GM12878 (cell line): ENCODE measurements at regions of chr1 and their contacts with region 1.

Region 1: GRCh38 chr1:221741711-221742554 is at the start of gene DUSP10:
- DNase-seq: peak; percentile 97
- ATAC-seq: peak; percentile 75
- H3K4me3 ChIP-seq: peak within 1 kb of the TSS; percentile 90
- H3K27ac ChIP-seq: peak within 1 kb of the TSS; percentile 89
- H3K4me1 ChIP-seq: peaks cover 19% of the 10 kb centered on the region
- H3K27me3 ChIP-seq: no peaks in the 10 kb centered on the region
- CTCF ChIP-seq: peak in 2 of 3 experiments; percentile 9 to 46; a peak in 2 of 6 replicates
- EP300 ChIP-seq: no peak
- POLR2A ChIP-seq: peak; percentile 72
- RAD21 ChIP-seq: peak; percentile 47
- polyA plus RNA-seq, gene DUSP10: 20.3 to 32.1 TPM

Region 2: DNA sequence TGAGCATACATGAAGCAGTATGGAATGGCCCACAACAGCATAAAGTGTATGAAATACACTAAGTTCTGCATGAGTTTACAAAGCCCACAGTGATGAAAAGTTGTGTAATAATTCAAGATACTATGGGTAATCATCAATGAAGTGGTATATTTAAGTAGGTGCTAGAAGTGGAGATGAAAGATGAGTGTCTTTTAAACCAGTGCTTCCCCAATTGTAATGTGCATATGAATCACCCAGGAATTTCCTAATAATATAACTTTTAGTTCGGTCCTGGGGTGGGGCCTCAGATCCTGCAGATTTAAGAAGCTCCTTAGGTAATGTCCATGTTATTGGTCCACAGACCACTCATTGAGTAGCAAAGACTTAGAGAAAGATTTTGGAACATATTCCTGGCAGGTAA is 184.9 kb before region 1 on chr1:
- CTCF ChIA-PET with region 1: no interaction called
- POLR2A ChIA-PET with region 1: no interaction called
- RAD21 ChIA-PET with region 1: no interaction called
- SMC1A ChIA-PET with region 1: no interaction called
- in situ Hi-C with region 1: no loop called
- intact Hi-C with region 1: no loop called
- DNase-seq: no peak
- ATAC-seq: no peak
- H3K4me3 ChIP-seq: no peak overlapping the region
- H3K27ac ChIP-seq: no peak overlapping the region
- H3K4me1 ChIP-seq: no peaks in the 10 kb centered on the region
- H3K27me3 ChIP-seq: no peaks in the 10 kb centered on the region
- CTCF ChIP-seq: no peak
- EP300 ChIP-seq: no peak
- POLR2A ChIP-seq: no peak
- RAD21 ChIP-seq: no peak

Region 3: GRCh38 chr1:221643404-221644144 is 98.4 kb before region 1 on chr1:
- CTCF ChIA-PET with region 1: interaction called, 5 read pairs
- POLR2A ChIA-PET with region 1: interaction called, 3 read pairs
- RAD21 ChIA-PET with region 1: interaction called, 40 read pairs
- SMC1A ChIA-PET with region 1: interaction called, 8 read pairs
- in situ Hi-C with region 1: no loop called
- intact Hi-C with region 1: no loop called
- DNase-seq: peak; percentile 47
- ATAC-seq: peak; percentile 87
- H3K4me3 ChIP-seq: peak overlapping the region; percentile 29; the same call in 1 of the 2 replicates
- H3K27ac ChIP-seq: peak overlapping the region; percentile 74
- H3K4me1 ChIP-seq: peaks cover 18% of the 10 kb centered on the region
- H3K27me3 ChIP-seq: no peaks in the 10 kb centered on the region
- CTCF ChIP-seq: no peak
- EP300 ChIP-seq: no peak
- POLR2A ChIP-seq: no peak
- RAD21 ChIP-seq: no peak

Region 4: DNA sequence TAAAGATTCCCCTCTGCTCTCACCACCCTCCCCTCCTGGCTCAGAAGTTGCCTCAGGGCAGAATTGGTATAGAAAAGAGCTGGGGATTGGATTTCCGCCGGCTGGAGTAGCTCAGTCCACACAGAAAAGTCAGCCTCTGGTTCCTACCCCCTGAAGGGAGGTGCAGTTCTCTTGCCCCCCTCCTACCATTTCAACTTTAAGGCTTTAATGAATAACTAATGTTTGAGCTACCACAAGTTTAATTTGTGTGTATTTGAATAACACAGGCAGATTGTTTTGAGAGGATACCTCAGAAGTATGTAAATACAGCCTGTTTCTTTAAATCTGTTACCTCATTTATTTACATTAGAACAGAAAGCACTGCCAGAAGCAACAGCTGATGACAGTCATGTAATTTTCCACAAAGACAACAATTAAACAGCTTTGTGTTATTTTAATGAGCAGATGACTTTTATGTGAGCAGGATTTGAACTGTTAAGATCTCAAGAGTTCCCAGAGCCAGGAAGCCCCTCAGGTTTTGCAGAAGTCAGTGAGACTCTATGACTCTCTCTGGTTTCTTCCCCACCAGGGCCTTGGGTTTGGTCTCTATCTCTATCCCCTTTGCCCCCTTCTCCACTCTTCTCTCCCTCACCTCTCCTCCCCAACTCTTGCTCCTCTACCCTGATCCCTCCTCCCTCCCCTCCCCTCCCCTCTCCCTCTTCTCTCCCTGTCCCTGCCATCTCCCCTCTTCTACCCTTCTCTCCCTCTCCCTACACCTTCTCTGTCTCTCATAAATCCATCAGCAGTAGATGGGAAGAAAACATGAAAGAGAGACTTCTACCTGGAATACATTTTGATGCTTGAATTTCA is 26.4 kb before region 1 on chr1:
- CTCF ChIA-PET with region 1: interaction called, 10 read pairs
- POLR2A ChIA-PET with region 1: interaction called, 52 read pairs
- RAD21 ChIA-PET with region 1: interaction called, 235 read pairs
- SMC1A ChIA-PET with region 1: interaction called, 199 read pairs
- in situ Hi-C with region 1: no loop called
- intact Hi-C with region 1: loop called (anchors 2 kb)
- DNase-seq: no peak
- ATAC-seq: no peak
- H3K4me3 ChIP-seq: no peak overlapping the region
- H3K27ac ChIP-seq: peak overlapping the region; percentile 25; the same call in 1 of the 2 replicates
- H3K4me1 ChIP-seq: peaks cover 32% of the 10 kb centered on the region
- H3K27me3 ChIP-seq: no peaks in the 10 kb centered on the region
- CTCF ChIP-seq: no peak
- EP300 ChIP-seq: no peak
- POLR2A ChIP-seq: no peak
- RAD21 ChIP-seq: no peak

Region 5: DNA sequence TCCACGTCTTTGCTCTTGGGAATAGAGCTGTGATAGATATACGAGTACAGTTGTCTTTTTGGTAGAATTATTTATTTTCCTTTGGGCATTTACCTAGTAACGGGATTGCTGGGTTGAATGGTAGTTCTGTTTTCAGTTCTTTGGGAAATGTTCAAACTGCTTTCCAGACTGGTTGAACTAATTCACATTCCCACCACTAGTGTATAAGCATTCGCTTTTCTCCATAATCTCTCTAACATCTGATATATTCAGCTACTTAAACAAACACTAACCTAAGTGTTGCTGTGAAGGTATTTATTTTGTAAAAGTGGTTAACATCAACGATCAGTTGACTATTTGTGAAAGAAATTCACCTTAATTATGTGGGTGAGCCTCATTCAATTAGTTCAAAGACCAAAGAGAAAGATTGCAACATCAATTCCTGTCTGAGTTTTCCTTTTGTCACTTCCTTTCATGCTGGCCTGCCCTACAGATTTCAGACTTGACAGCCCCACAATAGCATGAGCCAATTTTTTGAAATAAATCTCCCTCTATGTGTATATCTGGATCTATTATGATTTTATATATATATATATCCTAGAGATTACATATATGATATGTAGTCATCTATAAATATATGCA is 26.6 kb after region 1 on chr1:
- CTCF ChIA-PET with region 1: interaction called, 64 read pairs
- POLR2A ChIA-PET with region 1: interaction called, 99 read pairs
- RAD21 ChIA-PET with region 1: interaction called, 244 read pairs
- SMC1A ChIA-PET with region 1: interaction called, 211 read pairs
- in situ Hi-C with region 1: no loop called
- intact Hi-C with region 1: no loop called
- DNase-seq: no peak
- ATAC-seq: no peak
- H3K4me3 ChIP-seq: no peak overlapping the region
- H3K27ac ChIP-seq: no peak overlapping the region
- H3K4me1 ChIP-seq: peaks cover 3% of the 10 kb centered on the region; the same call in 1 of the 2 replicates
- H3K27me3 ChIP-seq: no peaks in the 10 kb centered on the region
- CTCF ChIP-seq: no peak
- EP300 ChIP-seq: no peak
- POLR2A ChIP-seq: no peak
- RAD21 ChIP-seq: no peak

Region 6: DNA sequence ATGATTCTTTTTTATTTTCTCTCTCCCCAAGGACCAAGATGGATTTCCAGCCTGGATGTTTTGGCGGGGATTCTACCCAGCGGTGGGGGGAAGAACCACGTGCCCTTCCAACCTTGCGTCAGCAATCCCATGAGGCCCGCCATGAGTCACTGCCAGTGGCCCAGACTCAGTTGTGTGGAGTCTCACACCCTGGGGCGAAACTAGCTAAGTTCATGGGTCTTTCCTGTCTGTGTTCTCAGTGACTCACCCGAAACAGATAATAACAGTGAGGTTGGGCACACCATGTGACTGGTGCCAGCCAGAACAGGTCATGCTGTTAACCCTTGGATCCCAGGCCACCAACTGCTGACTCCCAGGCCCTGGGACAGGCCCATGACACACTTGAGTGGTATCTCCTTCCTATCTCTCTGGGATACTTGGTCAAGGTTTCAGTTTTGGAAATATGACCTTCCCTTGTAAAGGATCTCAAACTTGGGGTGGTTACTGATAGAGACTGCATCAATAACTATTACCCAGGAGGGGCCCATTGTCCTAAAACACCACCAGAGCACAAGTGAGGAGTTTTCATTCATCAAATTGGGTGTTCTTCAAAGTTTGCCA is 98.0 kb after region 1 on chr1:
- CTCF ChIA-PET with region 1: interaction called, 4 read pairs
- POLR2A ChIA-PET with region 1: interaction called, 10 read pairs
- RAD21 ChIA-PET with region 1: interaction called, 29 read pairs
- SMC1A ChIA-PET with region 1: interaction called, 17 read pairs
- in situ Hi-C with region 1: no loop called
- intact Hi-C with region 1: loop called (anchors 1 kb)
- DNase-seq: peak; percentile 94
- ATAC-seq: peak; percentile 93
- H3K4me3 ChIP-seq: no peak overlapping the region
- H3K27ac ChIP-seq: peak overlapping the region; percentile 45; the same call in 1 of the 2 replicates
- H3K4me1 ChIP-seq: peaks cover 42% of the 10 kb centered on the region
- H3K27me3 ChIP-seq: no peaks in the 10 kb centered on the region
- CTCF ChIP-seq: no peak
- EP300 ChIP-seq: peak; percentile 97
- POLR2A ChIP-seq: no peak
- RAD21 ChIP-seq: no peak

Region 7: GRCh38 chr1:221900678-221901077 is 158.7 kb after region 1 on chr1:
- CTCF ChIA-PET with region 1: no interaction called
- POLR2A ChIA-PET with region 1: no interaction called
- RAD21 ChIA-PET with region 1: no interaction called
- SMC1A ChIA-PET with region 1: no interaction called
- in situ Hi-C with region 1: no loop called
- intact Hi-C with region 1: no loop called
- DNase-seq: peak; percentile 24
- ATAC-seq: peak; percentile 76
- H3K4me3 ChIP-seq: no peak overlapping the region
- H3K27ac ChIP-seq: no peak overlapping the region
- H3K4me1 ChIP-seq: no peaks in the 10 kb centered on the region
- H3K27me3 ChIP-seq: no peaks in the 10 kb centered on the region
- CTCF ChIP-seq: no peak
- EP300 ChIP-seq: no peak
- POLR2A ChIP-seq: no peak
- RAD21 ChIP-seq: no peak

Region 8: GRCh38 chr1:221972262-221973239 is 230.6 kb after region 1 on chr1:
- CTCF ChIA-PET with region 1: no interaction called
- POLR2A ChIA-PET with region 1: no interaction called
- RAD21 ChIA-PET with region 1: no interaction called
- SMC1A ChIA-PET with region 1: no interaction called
- in situ Hi-C with region 1: no loop called
- intact Hi-C with region 1: no loop called
- DNase-seq: no peak
- ATAC-seq: no peak
- H3K4me3 ChIP-seq: no peak overlapping the region
- H3K27ac ChIP-seq: no peak overlapping the region
- H3K4me1 ChIP-seq: no peaks in the 10 kb centered on the region
- H3K27me3 ChIP-seq: no peaks in the 10 kb centered on the region
- CTCF ChIP-seq: no peak
- EP300 ChIP-seq: no peak
- POLR2A ChIP-seq: no peak
- RAD21 ChIP-seq: no peak

Region 9: DNA sequence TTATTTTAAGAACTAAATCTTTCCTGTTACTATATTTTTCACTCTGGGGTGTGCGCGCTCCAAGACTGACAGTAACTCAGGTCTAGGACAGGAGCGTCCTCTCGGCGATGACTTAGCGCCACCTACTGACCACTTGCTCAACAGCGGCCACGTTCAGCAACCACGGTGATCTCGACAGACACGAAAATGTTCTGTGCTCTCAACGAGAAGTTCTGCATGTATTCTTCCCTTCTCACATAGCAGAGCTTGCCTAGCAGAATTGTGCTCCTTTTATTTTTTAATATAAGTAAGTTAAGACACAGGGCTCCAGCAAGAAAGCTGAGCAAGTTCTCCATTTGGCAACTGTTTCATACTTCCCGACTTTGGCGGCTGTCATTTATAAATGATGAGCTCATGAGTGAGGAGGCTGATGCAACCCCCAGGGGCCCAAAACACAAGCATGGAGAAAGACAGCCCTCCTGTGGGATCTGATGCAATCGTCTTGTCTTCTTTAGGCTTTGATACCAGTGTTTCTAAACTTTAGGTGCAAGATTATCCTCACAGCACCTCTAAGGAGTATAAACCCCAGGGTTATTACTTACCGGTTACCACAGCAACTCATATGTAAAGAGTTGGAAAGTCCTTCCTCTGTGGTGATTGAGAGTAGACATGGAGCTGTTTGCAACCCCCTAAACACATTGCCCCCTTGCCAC is 713.4 kb after region 1 on chr1:
- CTCF ChIA-PET with region 1: interaction called, 3 read pairs
- POLR2A ChIA-PET with region 1: no interaction called
- RAD21 ChIA-PET with region 1: interaction called, 5 read pairs
- SMC1A ChIA-PET with region 1: no interaction called
- in situ Hi-C with region 1: loop called (anchors 10 kb)
- intact Hi-C with region 1: loop called (anchors 5 kb)
- DNase-seq: peak; percentile 43
- ATAC-seq: peak; percentile 100
- H3K4me3 ChIP-seq: no peak overlapping the region
- H3K27ac ChIP-seq: no peak overlapping the region
- H3K4me1 ChIP-seq: no peaks in the 10 kb centered on the region
- H3K27me3 ChIP-seq: no peaks in the 10 kb centered on the region
- CTCF ChIP-seq: peak; percentile 91 to 97 (median 97)
- EP300 ChIP-seq: no peak
- POLR2A ChIP-seq: no peak
- RAD21 ChIP-seq: peak; percentile 93